Transverse colon (tissue), 4 donors: ENCODE measurements at regions of chr16 and their contacts with region 1.

Region 1: DNA sequence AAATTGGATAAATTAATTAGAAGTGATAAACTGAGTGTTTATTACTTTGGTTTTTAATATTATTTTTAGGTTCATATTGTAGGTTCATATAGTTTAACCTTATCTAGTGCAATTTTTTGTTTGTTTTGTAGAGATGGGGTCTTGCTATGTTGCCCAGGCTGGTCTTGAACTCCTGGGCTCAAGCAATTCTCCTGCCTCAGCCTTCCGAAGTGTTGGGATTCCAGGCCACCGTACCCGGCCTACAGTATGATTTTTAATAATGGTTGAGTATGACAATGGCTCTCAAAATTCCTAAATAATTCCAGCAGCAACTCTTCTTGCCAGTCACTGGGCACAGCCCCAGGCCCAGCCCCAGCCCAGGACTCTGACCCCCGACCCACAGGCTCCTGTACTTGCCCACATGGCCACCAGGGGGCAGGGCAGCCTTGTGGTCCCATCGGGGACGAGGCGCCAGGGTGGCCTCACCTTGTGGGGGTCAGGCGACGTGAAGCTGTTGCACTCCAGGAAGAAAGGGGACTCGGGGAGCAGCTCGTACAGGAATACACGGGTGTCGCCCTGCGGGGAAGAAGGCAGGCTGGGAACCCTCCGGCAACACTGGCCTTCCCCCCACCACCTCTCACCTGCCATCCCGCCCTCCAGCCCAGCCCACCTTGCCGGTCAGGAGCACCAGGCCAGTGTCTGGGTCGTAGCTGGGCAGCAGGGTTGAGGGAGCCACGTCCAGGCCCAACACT is 7.9 kb upstream of the PAM16 start:
- DNase-seq: peak; percentile 59
- H3K4me3 ChIP-seq: no peak overlapping the region
- H3K27ac ChIP-seq: no peak overlapping the region
- H3K4me1 ChIP-seq: no peaks in the 10 kb centered on the region
- H3K27me3 ChIP-seq: no peaks in the 10 kb centered on the region
- CTCF ChIP-seq: peak; percentile 92 to 97 (median 96)
- EP300 ChIP-seq: no peak
- POLR2A ChIP-seq: no peak

Region 2: GRCh38 chr16:3999479-4000325 is 359.3 kb before region 1 on chr16:
- in situ Hi-C with region 1: no loop called
- intact Hi-C with region 1: no loop called
- DNase-seq: no peak
- H3K4me3 ChIP-seq: no peak overlapping the region
- H3K27ac ChIP-seq: peak overlapping the region; percentile 40 to 67 (median 46)
- H3K4me1 ChIP-seq: peaks cover 0 to 7% (median 3%) of the 10 kb centered on the region in 4 donors
- H3K27me3 ChIP-seq: no peaks in the 10 kb centered on the region
- CTCF ChIP-seq: no peak
- EP300 ChIP-seq: no peak
- POLR2A ChIP-seq: no peak

Region 3: DNA sequence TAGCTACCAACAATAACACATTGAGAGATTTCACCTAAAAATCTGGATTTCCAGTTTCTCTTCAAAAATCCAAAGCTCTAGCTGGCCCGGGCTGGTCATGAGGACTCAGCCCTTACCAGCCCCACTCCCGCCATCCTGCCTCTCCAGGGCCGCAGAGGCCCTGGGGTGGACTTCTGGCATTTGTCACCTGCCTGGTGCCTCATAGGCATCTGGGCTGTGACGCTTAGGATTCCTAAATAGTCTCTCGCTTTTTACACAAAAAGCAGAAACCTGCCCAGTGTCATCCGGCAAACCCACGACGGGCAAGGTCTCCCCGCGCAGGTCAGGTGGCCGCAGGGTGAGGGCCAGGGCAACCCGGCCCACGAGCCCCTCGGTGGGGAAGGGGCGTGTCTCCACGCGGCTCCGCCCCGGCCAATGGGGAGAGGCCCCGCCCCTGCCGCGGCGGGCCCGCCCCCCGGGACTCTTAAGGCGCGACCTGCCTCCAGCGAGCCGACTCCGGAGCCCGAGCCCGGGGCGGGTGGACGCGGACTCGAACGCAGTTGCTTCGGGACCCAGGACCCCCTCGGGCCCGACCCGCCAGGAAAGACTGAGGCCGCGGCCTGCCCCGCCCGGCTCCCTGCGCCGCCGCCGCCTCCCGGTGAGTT is 12.5 kb after region 1 on chr16 and contains the start of gene VASN:
- in situ Hi-C with region 1: no loop called
- intact Hi-C with region 1: no loop called
- DNase-seq: peak; percentile 77
- H3K4me3 ChIP-seq: peak within 1 kb of the TSS; percentile 52 to 67 (median 58)
- H3K27ac ChIP-seq: peak within 1 kb of the TSS; percentile 78 to 92 (median 83)
- H3K4me1 ChIP-seq: peaks cover 23 to 52% (median 42%) of the 10 kb centered on the region in 4 donors
- H3K27me3 ChIP-seq: no peaks in the 10 kb centered on the region
- CTCF ChIP-seq: no peak
- EP300 ChIP-seq: no peak
- POLR2A ChIP-seq: peak; percentile 83
- total RNA-seq, gene VASN: 3.4 to 18.7 (median 9.0) TPM

Region 4: GRCh38 chr16:4402439-4403132 is 43.6 kb after region 1 on chr16:
- in situ Hi-C with region 1: loop called in 2 of 4 experiments (anchors 5 to 10 kb)
- intact Hi-C with region 1: loop called (anchors 1 kb)
- DNase-seq: peak; percentile 85
- H3K4me3 ChIP-seq: no peak overlapping the region
- H3K27ac ChIP-seq: no peak overlapping the region
- H3K4me1 ChIP-seq: peaks cover 0 to 5% (median 4%) of the 10 kb centered on the region in 4 donors
- H3K27me3 ChIP-seq: no peaks in the 10 kb centered on the region
- CTCF ChIP-seq: peak; percentile 88 to 94 (median 93)
- EP300 ChIP-seq: no peak
- POLR2A ChIP-seq: no peak

Region 5: GRCh38 chr16:4475880-4476788 is 117.1 kb after region 1 on chr16 and contains the start of gene HMOX2:
- in situ Hi-C with region 1: no loop called
- intact Hi-C with region 1: loop called (anchors 1 kb)
- DNase-seq: peak; percentile 96
- H3K4me3 ChIP-seq: peak within 1 kb of the TSS; percentile 77 to 96 (median 89)
- H3K27ac ChIP-seq: peak within 1 kb of the TSS; percentile 90 to 94 (median 92)
- H3K4me1 ChIP-seq: peaks cover 0 to 31% (median 20%) of the 10 kb centered on the region in 4 donors
- H3K27me3 ChIP-seq: no peaks in the 10 kb centered on the region
- CTCF ChIP-seq: peak in 4 of 5 experiments; percentile 25 to 47 (median 41)
- EP300 ChIP-seq: no peak
- POLR2A ChIP-seq: peak; percentile 94
- total RNA-seq, gene HMOX2: 46.4 to 495 (median 55.7) TPM

Region 6: DNA sequence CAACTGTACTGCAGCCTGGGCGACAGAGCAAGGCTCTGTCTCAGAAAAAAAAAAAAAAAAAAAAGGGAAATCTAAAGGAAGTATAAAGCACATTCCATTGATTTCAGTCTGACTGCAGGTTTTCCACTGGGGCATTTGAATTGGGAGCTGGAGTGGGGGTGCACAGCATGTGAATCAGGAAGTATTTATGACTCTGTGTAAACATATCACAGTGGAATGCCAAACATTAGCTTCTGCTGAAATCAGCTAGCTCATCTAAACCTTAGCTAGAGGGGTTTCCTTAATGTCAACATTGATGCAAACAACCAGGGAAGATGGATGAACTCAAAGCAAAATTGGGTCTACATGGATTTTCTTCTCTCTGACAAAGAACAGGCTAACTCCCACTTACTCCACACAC is 1379.6 kb after region 1 on chr16:
- in situ Hi-C with region 1: no loop called
- intact Hi-C with region 1: no loop called
- DNase-seq: no peak
- H3K4me3 ChIP-seq: no peak overlapping the region
- H3K27ac ChIP-seq: no peak overlapping the region
- H3K4me1 ChIP-seq: no peaks in the 10 kb centered on the region
- H3K27me3 ChIP-seq: no peaks in the 10 kb centered on the region
- CTCF ChIP-seq: no peak
- EP300 ChIP-seq: no peak
- POLR2A ChIP-seq: no peak